Sigmoid colon (tissue), 7 donors: ENCODE measurements at regions of chr19 and their contacts with region 1.

Region 1: GRCh38 chr19:7680606-7681339 is at the start of gene TRAPPC5:
- DNase-seq: peak; percentile 89
- H3K4me3 ChIP-seq: peak within 1 kb of the TSS; percentile 94 to 98 (median 97)
- H3K27ac ChIP-seq: peak within 1 kb of the TSS; percentile 86 to 90 (median 86)
- H3K4me1 ChIP-seq: peaks cover 0 to 22% (median 14%) of the 10 kb centered on the region in 4 donors
- H3K27me3 ChIP-seq: peaks cover 0 to 40% (median 15%) of the 10 kb centered on the region in 3 donors
- CTCF ChIP-seq: peak; percentile 8 to 99 (median 42)
- EP300 ChIP-seq: no peak
- POLR2A ChIP-seq: no peak
- total RNA-seq, gene TRAPPC5: 32.8 to 89.6 (median 50.5) TPM

Region 2: DNA sequence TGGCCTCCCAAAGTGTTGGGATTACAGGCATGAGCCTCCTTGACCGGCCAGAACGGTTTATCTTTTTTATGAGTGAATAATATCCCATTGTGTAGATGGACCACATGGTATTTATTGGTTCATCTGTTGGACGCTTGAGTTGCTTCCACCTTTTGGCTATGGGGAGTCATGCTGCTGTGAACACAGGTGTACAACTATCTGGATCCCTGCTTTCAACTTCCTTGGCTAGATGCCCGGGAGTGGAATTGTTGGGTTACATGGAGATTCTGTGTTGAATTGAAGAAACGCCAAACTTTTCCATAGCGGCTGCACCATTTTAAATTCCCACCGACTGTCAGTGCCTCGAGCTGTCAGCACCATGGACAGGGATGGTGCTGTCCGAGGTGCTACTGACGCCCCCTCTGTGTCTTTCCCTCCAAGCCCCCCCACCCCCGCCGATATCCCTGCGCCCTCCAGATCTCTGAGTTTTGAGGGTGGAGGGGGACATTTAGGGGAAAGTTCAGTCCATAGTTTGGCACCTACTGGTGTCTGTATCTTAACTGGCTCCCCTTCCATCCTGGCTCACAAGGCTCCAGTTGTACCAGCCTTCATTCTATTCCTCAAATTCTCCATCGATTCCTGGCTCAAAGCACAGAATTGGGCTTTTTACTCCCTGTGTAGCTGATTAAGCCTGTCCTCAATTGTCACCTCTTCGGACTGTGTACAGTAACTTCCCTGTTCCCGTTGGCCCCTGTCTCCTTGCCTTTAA is 118.0 kb before region 1 on chr19:
- intact Hi-C with region 1: loop called (anchors 5 kb)
- DNase-seq: no peak
- H3K4me3 ChIP-seq: no peak overlapping the region
- H3K27ac ChIP-seq: no peak overlapping the region
- H3K4me1 ChIP-seq: no peaks in the 10 kb centered on the region
- H3K27me3 ChIP-seq: no peaks in the 10 kb centered on the region
- CTCF ChIP-seq: no peak
- EP300 ChIP-seq: no peak
- POLR2A ChIP-seq: no peak

Region 3: GRCh38 chr19:7629347-7630054 is 51.3 kb before region 1 on chr19 and contains the starts of genes PET100 and XAB2:
- intact Hi-C with region 1: loop called (anchors 2 kb)
- DNase-seq: peak; percentile 99
- H3K4me3 ChIP-seq: peak within 1 kb of the TSS; percentile 78 to 98 (median 97)
- H3K27ac ChIP-seq: peak within 1 kb of the TSS; percentile 81 to 91 (median 88)
- H3K4me1 ChIP-seq: peaks cover 0 to 38% (median 33%) of the 10 kb centered on the region in 4 donors
- H3K27me3 ChIP-seq: no peaks in the 10 kb centered on the region
- CTCF ChIP-seq: no peak
- EP300 ChIP-seq: no peak
- POLR2A ChIP-seq: no peak
- total RNA-seq, gene PET100: 10.8 to 37.1 (median 30.1) TPM
- total RNA-seq, gene XAB2: 29.5 to 38.3 (median 33.8) TPM

Region 4: GRCh38 chr19:7652061-7652641 is 28.6 kb before region 1 on chr19:
- intact Hi-C with region 1: loop called (anchors 1 kb)
- DNase-seq: peak; percentile 90
- H3K4me3 ChIP-seq: peak overlapping the region in 2 of 4 donors; percentile 28 to 30
- H3K27ac ChIP-seq: peak overlapping the region in 1 of 4 donors; percentile 35
- H3K4me1 ChIP-seq: peaks cover 0 to 8% (median 4%) of the 10 kb centered on the region in 4 donors
- H3K27me3 ChIP-seq: peaks cover 0 to 12% (median 0%) of the 10 kb centered on the region in 3 donors
- CTCF ChIP-seq: peak; percentile 88 to 96 (median 92)
- EP300 ChIP-seq: no peak
- POLR2A ChIP-seq: no peak

Region 5: GRCh38 chr19:7751157-7751783 is 70.5 kb after region 1 on chr19:
- intact Hi-C with region 1: no loop called
- DNase-seq: no peak
- H3K4me3 ChIP-seq: no peak overlapping the region
- H3K27ac ChIP-seq: no peak overlapping the region
- H3K4me1 ChIP-seq: no peaks in the 10 kb centered on the region
- H3K27me3 ChIP-seq: peaks cover 0 to 40% (median 6%) of the 10 kb centered on the region in 3 donors
- CTCF ChIP-seq: no peak
- EP300 ChIP-seq: no peak
- POLR2A ChIP-seq: no peak

Region 6: DNA sequence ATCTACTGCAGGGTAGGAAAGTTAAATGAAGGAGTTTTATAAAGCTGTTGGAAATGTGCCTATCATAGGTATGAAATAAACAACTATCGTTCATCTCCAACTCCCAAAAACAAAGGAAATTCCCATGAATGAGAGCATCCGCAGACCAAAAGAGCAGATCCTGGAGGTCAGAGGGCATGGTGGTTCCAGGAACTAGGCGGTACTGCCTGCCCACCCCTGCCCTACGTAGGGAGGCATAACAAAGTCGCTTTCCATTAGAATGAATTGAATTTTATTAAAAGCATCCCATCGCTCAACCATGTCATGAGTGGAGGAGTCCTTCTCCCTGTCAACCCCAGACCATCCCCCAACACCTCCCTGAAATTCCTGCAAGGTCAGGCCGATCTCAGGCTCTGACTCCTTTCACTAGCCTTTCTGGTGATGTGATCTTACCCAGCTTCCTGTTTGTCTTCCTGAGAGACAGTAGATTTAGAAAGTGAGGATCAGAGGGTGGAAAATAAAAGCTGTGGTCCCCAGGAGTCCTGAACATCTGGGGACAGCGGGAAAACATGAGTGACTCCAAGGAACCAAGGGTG is 82.0 kb after region 1 on chr19 and contains the start of gene CLEC4M:
- intact Hi-C with region 1: no loop called
- DNase-seq: no peak
- H3K4me3 ChIP-seq: no peak within 1 kb of the TSS
- H3K27ac ChIP-seq: no peak within 1 kb of the TSS
- H3K4me1 ChIP-seq: no peaks in the 10 kb centered on the region
- H3K27me3 ChIP-seq: peaks cover 0 to 11% (median 0%) of the 10 kb centered on the region in 3 donors
- CTCF ChIP-seq: no peak
- EP300 ChIP-seq: no peak
- POLR2A ChIP-seq: no peak
- total RNA-seq, gene CLEC4M: 1.4 TPM in 1 of 4 donors, not detected in the others

Region 7: GRCh38 chr19:7799640-7800355 is 119.0 kb after region 1 on chr19:
- intact Hi-C with region 1: loop called (anchors 5 kb)
- DNase-seq: peak; percentile 76
- H3K4me3 ChIP-seq: peak overlapping the region in 1 of 4 donors; percentile 15
- H3K27ac ChIP-seq: no peak overlapping the region
- H3K4me1 ChIP-seq: peaks cover 0 to 4% (median 0%) of the 10 kb centered on the region in 4 donors
- H3K27me3 ChIP-seq: peaks cover 4 to 80% (median 35%) of the 10 kb centered on the region in 3 donors
- CTCF ChIP-seq: peak in 3 of 4 experiments; percentile 33 to 42 (median 38)
- EP300 ChIP-seq: no peak
- POLR2A ChIP-seq: no peak

Region 8: GRCh38 chr19:7841751-7842660 is 161.2 kb after region 1 on chr19:
- intact Hi-C with region 1: no loop called
- DNase-seq: no peak
- H3K4me3 ChIP-seq: no peak overlapping the region
- H3K27ac ChIP-seq: no peak overlapping the region
- H3K4me1 ChIP-seq: no peaks in the 10 kb centered on the region
- H3K27me3 ChIP-seq: no peaks in the 10 kb centered on the region
- CTCF ChIP-seq: no peak
- EP300 ChIP-seq: no peak
- POLR2A ChIP-seq: no peak